Right cardiac atrium (tissue), 5 donors: ENCODE measurements at regions of chr15 and their contacts with region 1.

Region 1: GRCh38 chr15:85485956-85486567 is 105.7 kb downstream of the AKAP13 start:
- DNase-seq: no peak
- ATAC-seq: peak; percentile 75 to 80
- H3K4me3 ChIP-seq: no peak overlapping the region
- H3K27ac ChIP-seq: no peak overlapping the region
- H3K4me1 ChIP-seq: peaks cover 4% of the 10 kb centered on the region
- H3K27me3 ChIP-seq: no peaks in the 10 kb centered on the region

Region 2: GRCh38 chr15:85318048-85318731 is 167.9 kb before region 1 on chr15:
- intact Hi-C with region 1: no loop called
- DNase-seq: no peak
- ATAC-seq: peak; percentile 60 to 78
- H3K4me3 ChIP-seq: no peak overlapping the region
- H3K27ac ChIP-seq: no peak overlapping the region
- H3K4me1 ChIP-seq: no peaks in the 10 kb centered on the region
- H3K27me3 ChIP-seq: no peaks in the 10 kb centered on the region

Region 3: DNA sequence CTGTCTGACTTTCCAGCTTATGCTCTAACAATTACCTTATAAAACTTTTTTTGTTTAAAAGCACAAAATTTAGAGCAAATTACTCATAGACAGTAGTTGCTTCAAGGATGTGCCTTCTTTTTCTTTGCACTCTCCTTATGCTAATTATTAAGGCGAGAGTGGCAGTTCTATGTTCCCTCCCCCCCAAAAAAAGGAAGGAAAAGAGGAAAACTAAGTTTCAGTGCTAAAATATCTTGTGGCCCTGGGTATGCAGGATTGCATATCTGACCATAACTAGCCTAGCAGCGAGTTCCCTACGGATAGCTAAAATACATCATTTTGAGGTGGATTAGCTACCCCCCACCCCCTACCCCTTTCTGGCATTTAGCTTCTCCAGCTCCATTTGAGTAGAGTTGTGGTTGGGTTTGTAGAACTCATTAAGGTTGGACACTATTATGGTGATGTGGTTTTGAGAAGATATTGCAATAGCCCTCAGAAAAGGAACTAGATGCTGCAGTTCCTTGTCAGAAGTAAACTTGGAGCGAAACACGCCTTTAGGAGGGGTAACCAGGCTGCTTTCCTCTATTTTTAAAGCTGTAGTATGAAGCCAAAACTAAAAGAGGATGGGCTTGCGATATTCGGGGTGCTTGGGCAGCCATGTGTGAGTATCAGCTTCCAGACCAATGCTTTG is 68.9 kb after region 1 on chr15:
- intact Hi-C with region 1: no loop called
- DNase-seq: no peak
- ATAC-seq: no peak
- H3K4me3 ChIP-seq: no peak overlapping the region
- H3K27ac ChIP-seq: no peak overlapping the region
- H3K4me1 ChIP-seq: peaks cover 2% of the 10 kb centered on the region
- H3K27me3 ChIP-seq: no peaks in the 10 kb centered on the region

Region 4: GRCh38 chr15:85582131-85583079 is 96.3 kb after region 1 on chr15:
- intact Hi-C with region 1: loop called in 1 of 4 experiments (anchors 10 kb)
- DNase-seq: peak; percentile 68 to 87 (median 83)
- ATAC-seq: peak; percentile 78 to 82
- H3K4me3 ChIP-seq: peak overlapping the region; percentile 95
- H3K27ac ChIP-seq: peak overlapping the region; percentile 99
- H3K4me1 ChIP-seq: peaks cover 34% of the 10 kb centered on the region
- H3K27me3 ChIP-seq: no peaks in the 10 kb centered on the region

Region 5: DNA sequence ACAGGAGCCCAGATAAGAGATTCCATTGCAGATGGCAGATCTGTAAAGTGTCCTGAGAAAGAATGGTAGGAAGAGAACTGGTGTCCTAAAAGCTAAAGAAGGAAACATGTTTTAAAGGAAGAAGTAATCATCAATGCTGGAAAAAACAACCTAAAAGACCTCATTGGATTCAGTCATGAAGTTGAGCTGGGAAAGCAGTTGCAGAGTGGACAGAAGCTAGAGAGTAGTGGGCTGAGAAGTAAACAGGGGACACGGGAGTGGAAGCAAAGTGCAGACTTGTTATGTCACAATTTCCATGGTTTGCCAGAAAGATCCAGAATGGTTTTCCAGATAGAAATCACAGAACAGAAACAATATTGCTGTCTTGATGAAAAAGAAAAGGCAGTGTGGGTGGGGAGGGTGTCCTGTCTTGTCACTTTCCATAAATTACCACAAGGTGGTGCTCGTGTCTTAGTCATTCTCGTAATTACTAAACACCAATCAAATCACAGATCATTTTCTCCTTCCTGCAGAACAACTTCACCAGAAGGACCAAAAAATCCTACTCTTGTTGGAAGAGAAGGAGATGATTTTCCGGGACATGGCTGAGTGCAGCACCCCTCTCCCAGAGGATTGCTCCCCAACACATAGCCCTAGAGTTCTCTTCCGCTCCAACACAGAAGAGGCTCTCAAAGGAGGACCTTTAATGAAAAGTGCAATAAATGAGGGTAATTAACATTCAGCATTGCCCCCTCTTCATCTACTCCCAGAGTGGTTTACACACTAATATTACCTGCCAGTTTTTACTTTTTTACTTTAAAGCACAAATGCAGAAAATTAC is 244.1 kb after region 1 on chr15:
- intact Hi-C with region 1: loop called in 1 of 4 experiments (anchors 10 kb)
- DNase-seq: no peak
- ATAC-seq: peak; percentile 57 to 62
- H3K4me3 ChIP-seq: no peak overlapping the region
- H3K27ac ChIP-seq: no peak overlapping the region
- H3K4me1 ChIP-seq: no peaks in the 10 kb centered on the region
- H3K27me3 ChIP-seq: no peaks in the 10 kb centered on the region